PC-3 (cell line): ENCODE measurements at regions of chr7 and their contacts with region 1.

Region 1: GRCh38 chr7:9822458-9823290 is 1151.0 kb upstream of the PHF14 start:
- DNase-seq: no peak
- ATAC-seq: no peak
- H3K4me3 ChIP-seq: no peak overlapping the region
- H3K27ac ChIP-seq: no peak overlapping the region
- H3K4me1 ChIP-seq: no peaks in the 10 kb centered on the region
- H3K27me3 ChIP-seq: no peaks in the 10 kb centered on the region
- CTCF ChIP-seq: no peak

Region 2: GRCh38 chr7:9937944-9938631 is 115.4 kb after region 1 on chr7:
- CTCF ChIA-PET with region 1: no interaction called
- POLR2A ChIA-PET with region 1: no interaction called
- intact Hi-C with region 1: loop called (anchors 5 kb)
- DNase-seq: peak; percentile 36
- ATAC-seq: peak; percentile 98
- H3K4me3 ChIP-seq: peak overlapping the region; percentile 18; the same call in 1 of the 2 replicates
- H3K27ac ChIP-seq: no peak overlapping the region
- H3K4me1 ChIP-seq: no peaks in the 10 kb centered on the region; the same call in 1 of the 2 replicates
- H3K27me3 ChIP-seq: no peaks in the 10 kb centered on the region
- CTCF ChIP-seq: no peak